Activated T-helper 1 cell treated with anti-CD3 and anti-CD28 coated beads, Interleukin-12 subunit alpha, Interleukin-12 subunit beta, Interleukin-2, Interleukin-4 antibody, amounts not matched to agents 30 ng/mL and 10 ng/mL and 1 ng/mL, durations not matched to agents 14 hours and 24 hours and 36 hours (primary cell): ENCODE measurements at regions of chr18 and their contacts with region 1.

Region 1: GRCh38 chr18:35811896-35812295 is 160.6 kb upstream of the RMP24 start:
- DNase-seq: no peak
- H3K4me3 Mint-ChIP-seq: no peak overlapping the region
- H3K27ac Mint-ChIP-seq: no peak overlapping the region
- H3K4me1 Mint-ChIP-seq: peaks cover 14% of the 10 kb centered on the region
- H3K27me3 Mint-ChIP-seq: no peaks in the 10 kb centered on the region

Region 2: DNA sequence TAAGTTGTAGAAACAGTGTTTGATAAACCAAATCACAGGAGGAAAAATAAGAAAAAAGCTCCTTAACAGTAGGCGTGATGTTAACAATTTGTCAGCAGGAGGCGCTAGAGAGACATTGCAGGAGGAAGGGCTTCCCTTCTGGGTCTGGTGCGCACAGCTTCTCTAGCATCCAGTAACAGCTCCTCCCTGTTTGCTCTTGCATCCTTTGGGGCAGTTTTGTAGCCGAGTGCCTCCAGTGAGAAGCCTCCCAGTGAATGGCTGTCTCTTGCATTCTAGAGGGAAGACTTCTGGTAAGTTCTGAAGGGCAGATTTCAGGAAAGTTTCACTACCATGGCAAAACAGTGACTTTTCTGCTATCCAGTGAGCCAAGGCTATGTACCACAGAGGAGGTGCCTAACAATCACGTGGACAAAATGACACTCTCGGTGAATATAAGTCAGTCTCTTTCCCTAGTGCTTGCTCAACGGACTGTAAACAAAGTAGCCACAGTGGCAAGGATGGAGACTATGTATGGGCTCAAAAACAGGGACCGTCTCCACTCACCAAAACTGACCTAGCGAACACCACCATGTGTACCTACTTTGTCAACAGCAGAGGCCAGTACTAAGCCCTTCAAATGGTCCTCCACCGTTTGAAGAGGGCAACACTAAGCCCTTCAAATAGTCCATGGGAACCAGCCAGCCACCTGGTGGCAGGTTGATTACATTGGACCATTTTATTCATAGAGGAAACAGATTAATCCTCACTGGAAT is 425.1 kb before region 1 on chr18:
- intact Hi-C with region 1: no loop called
- DNase-seq: peak; percentile 56
- H3K4me3 Mint-ChIP-seq: no peak overlapping the region
- H3K27ac Mint-ChIP-seq: no peak overlapping the region
- H3K4me1 Mint-ChIP-seq: peaks cover 9% of the 10 kb centered on the region
- H3K27me3 Mint-ChIP-seq: peaks cover 21% of the 10 kb centered on the region

Region 3: GRCh38 chr18:35542356-35542755 is 269.5 kb before region 1 on chr18:
- intact Hi-C with region 1: no loop called
- DNase-seq: no peak
- H3K4me3 Mint-ChIP-seq: no peak overlapping the region
- H3K27ac Mint-ChIP-seq: no peak overlapping the region
- H3K4me1 Mint-ChIP-seq: no peaks in the 10 kb centered on the region
- H3K27me3 Mint-ChIP-seq: peaks cover 5% of the 10 kb centered on the region

Region 4: DNA sequence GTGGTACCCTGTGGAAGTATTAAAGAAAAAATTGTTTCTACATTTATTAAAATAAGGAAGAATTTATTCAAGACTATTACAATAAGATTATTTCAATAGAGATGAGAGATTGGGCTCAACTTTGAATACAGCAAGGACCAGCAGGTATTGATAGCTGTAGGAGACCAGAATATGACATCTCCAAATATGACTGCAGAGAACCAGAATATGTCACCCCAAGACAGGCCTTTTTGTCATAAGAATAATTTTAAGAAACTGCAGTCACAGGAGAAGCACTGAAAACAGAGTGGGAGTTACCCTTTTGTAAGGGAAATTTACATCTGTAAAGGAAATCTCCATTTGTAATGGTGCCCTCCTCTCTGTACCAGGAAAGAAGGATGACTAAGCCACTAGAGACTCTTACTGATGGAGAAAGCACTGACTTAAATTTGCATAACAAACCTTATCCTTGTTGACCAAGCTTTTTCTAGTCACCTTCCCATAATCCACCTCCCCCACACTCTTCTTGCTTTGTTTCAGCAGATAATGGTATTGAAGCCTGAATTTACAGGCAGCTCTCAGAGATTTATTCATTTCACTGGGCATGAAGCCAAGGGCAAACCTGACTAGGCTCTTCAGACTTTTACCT is 15.5 kb after region 1 on chr18:
- intact Hi-C with region 1: loop called (anchors 1 kb)
- DNase-seq: no peak
- H3K4me3 Mint-ChIP-seq: no peak overlapping the region
- H3K27ac Mint-ChIP-seq: no peak overlapping the region
- H3K4me1 Mint-ChIP-seq: no peaks in the 10 kb centered on the region
- H3K27me3 Mint-ChIP-seq: no peaks in the 10 kb centered on the region

Region 5: DNA sequence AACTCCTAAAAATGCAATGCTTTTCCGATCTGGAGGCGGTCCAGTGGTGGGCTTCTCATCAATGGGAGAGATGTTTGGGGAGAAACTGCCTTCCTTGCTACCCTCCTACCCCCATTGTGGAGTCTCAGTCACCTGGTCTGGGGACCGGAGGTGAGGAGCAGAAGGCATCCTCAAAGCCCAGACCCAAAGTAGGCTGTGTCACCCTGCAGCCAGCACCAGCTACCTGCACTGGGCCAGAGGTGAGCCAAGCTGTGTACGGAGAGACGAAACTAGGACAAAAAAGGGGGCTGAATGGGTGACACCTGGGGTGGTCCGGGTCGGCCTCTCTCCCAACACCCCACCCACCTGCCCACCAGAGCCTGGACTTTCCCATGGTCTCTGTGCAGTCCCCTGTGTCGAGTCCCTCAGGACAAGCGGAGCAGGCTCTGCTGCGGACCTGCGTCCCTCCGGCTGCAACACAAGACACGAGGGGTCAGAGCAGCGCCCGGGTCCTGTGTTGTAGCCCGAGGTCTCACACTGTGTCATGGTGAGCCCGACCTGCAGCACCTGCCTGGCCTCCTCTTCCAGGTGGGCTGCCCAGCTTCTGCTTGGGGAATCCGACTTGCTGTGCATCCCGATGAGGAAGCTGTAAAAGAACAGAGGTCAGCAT is 92.6 kb after region 1 on chr18:
- intact Hi-C with region 1: no loop called
- DNase-seq: no peak
- H3K4me3 Mint-ChIP-seq: no peak overlapping the region
- H3K27ac Mint-ChIP-seq: no peak overlapping the region
- H3K4me1 Mint-ChIP-seq: no peaks in the 10 kb centered on the region
- H3K27me3 Mint-ChIP-seq: no peaks in the 10 kb centered on the region

Region 6: GRCh38 chr18:36899289-36899688 is 1087.4 kb after region 1 on chr18:
- intact Hi-C with region 1: no loop called
- DNase-seq: no peak
- H3K4me3 Mint-ChIP-seq: no peak overlapping the region
- H3K27ac Mint-ChIP-seq: no peak overlapping the region
- H3K4me1 Mint-ChIP-seq: no peaks in the 10 kb centered on the region
- H3K27me3 Mint-ChIP-seq: no peaks in the 10 kb centered on the region